GM10248 (cell line): ENCODE measurements at regions of chr15 and their contacts with region 1.

Region 1: GRCh38 chr15:67120839-67121643 is 55.6 kb downstream of the SMAD3 start:
- DNase-seq: peak; percentile 81
- CTCF ChIP-seq: no peak

Region 2: GRCh38 chr15:66997212-66997611 is 123.8 kb before region 1 on chr15:
- CTCF ChIA-PET with region 1: no interaction called
- POLR2A ChIA-PET with region 1: no interaction called
- DNase-seq: no peak
- CTCF ChIP-seq: no peak

Region 3: GRCh38 chr15:67101911-67102598 is 19.0 kb before region 1 on chr15:
- CTCF ChIA-PET with region 1: interaction called, 20 read pairs
- POLR2A ChIA-PET with region 1: interaction called, 3 read pairs
- DNase-seq: peak; percentile 65
- CTCF ChIP-seq: no peak

Region 4: DNA sequence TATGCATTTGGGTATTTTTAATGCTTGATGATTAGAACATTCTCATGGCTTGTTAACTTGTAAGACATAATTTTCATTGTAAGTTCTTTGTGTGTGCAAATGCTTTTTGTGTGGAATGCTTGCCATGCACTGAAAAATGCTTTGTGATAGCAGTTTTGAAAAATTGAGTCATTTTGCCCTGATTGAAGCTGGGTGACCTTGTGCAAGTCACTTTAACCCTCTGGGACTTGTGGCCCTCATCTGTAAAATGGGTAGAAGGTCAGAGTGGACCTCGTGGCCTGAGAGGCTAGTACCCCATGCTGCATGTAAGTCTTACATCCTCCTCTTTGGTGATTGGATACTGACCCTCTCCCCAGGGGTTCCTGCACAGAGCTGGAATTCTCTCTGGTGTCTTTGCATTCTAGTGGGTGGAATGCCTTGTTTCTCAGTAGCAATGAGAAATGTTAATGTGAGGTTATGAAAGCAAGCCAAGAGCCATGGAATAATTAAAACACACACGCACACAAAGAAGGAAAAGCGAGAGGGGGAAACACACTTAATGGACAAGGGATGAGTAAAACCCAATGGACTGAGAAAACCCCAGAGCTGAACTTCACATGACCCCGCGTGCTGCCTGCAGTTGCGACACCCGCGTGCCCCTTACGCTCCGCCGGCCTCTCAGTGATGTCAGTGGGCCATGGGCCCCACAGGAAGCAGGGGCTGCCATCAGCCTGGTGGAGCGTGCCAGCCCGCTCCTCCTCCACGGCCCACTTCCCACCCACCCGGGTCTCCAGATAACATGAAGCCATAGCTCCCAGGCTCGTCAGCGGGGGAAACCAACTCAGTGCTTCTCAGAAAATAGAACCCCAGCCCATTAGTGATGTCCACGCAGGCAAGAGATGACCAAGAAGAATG is 11.7 kb before region 1 on chr15:
- CTCF ChIA-PET with region 1: interaction called, 10 read pairs
- POLR2A ChIA-PET with region 1: interaction called, 3 read pairs
- DNase-seq: peak; percentile 69
- CTCF ChIP-seq: no peak

Region 5: DNA sequence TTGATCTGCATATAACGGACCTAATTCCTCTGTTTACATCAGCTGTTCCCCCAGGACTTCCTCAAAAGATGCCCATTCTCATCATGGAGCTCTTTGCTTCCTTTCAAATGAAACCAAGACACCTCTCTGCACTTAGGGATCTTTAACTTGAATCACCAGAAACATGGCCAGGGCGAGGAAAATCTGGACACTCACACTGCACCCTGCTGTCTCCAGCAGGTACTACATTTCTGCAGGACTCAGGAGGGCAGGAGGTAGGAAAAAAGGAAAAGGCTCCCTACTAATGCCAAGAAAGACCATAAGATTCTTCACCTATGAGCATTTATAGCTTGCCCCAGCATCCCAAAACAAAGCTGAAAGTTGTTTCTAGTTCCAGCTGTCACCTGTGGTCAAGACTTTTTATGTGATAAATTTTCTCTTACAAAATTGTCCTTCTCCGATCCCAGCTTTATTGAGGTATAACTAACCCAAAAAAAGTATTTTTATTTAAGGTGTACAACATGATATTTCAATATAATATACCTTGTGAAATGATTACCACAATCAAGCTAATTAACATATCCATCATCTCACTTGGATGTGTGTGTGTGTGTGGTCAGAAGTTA is 312.6 kb after region 1 on chr15:
- CTCF ChIA-PET with region 1: no interaction called
- POLR2A ChIA-PET with region 1: no interaction called
- DNase-seq: peak; percentile 52
- CTCF ChIP-seq: peak; percentile 71